ENCODE measurements at regions of chr11 and their contacts with region 1.

Region 1: DNA sequence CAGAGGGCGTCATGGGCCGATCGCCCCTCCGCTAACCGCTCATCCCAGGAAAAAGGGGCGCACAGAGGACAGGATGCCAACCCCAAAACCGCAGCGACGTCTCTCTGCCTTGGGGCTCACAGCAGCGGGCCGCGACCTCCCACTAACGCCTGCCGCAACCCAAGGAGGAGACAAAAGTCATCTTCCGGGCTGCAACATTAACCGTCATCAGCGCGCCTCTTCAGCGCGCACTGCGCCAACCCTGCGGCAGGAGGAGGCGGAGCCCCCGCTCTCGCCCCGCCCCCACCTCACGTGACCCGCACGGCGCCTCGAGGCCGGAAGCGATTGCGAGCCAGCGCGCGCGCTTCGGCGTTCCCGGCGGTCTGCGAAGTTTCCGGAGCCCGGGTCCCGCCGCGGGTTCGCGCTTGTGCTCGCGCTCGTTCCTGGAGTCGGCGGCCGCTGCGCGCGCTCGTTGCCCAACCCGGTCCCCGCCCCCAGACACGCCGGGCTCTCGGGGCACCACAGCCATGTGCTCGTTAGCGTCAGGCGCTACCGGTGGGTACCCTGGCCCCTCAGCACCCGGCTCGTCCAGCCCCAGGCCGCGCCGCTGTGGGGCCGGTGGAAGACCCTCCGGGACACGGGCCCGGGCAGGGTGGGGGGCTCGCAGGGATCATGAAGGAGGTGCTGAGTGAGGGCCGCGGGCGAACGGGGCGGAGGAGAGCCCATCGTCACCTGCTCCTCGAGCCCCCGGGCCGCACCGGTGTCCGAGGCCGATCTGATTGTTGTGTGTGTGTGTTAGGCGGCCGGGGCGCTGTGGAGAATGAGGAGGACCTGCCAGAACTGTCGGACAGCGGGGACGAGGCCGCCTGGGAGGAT is at the start of gene PRMT3:
- DNase-seq: peak; percentile 96
- H3K4me3 ChIP-seq: peak within 1 kb of the TSS; percentile 83
- H3K27ac ChIP-seq: peak within 1 kb of the TSS; percentile 75
- H3K4me1 ChIP-seq: peaks cover 17% of the 10 kb centered on the region
- CTCF ChIP-seq: peak; percentile 95
- total RNA-seq, gene PRMT3: 23.9 and 34.0 TPM in 2 replicates

Region 2: DNA sequence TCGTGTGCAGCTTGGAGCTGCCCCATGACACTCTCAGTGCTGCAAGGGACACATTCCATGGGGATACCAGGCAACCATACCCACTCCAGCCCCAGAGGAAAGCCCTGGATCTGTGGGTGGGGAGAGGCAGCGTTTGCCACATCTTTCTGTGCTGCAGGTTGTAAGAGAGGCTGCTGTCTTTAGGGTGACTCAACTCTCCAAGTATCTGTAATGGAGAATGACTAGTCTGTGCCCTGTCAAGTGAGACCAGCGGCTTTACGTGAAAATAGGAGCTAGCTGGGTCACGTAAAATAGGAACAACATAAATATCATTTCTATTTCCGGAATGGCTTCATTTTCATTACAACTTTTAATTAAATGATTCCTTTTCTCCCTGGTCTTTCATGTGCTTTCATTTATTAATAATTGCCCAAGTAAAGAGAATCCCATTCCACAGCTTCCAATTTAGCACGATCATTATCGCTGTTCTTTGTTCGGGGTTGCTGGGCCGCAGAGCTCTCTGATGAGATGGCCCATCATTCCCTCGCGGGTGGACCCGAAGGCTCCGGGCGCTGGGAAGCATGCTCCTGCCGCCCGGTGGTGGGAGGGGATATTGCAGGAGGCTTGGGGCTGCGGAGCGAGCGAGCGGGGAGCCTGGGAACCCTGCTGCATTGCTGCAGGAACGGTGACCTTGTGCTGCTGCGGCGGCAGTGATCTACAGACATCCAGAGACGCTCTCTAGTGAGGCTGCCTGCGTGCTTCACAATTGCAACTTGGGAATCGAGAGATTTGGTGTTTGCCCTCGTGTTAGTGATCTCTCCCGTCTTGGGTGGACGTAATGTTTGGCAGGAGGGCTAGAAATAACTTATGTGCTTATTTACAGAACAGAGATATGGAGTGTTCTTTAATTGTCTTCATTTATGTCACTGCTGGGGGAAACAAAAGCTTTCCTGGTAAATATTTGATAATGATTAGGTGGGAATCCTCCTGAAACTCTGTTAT is 222.5 kb after region 1 on chr11:
- CTCF ChIA-PET with region 1: no interaction called
- POLR2A ChIA-PET with region 1: no interaction called
- intact Hi-C with region 1: loop called (anchors 2 kb)
- DNase-seq: peak; percentile 44
- H3K4me3 ChIP-seq: no peak overlapping the region
- H3K27ac ChIP-seq: no peak overlapping the region
- H3K4me1 ChIP-seq: no peaks in the 10 kb centered on the region
- CTCF ChIP-seq: peak; percentile 77